GM10248 (cell line): ENCODE measurements at regions of chr9 and their contacts with region 1.

Region 1: DNA sequence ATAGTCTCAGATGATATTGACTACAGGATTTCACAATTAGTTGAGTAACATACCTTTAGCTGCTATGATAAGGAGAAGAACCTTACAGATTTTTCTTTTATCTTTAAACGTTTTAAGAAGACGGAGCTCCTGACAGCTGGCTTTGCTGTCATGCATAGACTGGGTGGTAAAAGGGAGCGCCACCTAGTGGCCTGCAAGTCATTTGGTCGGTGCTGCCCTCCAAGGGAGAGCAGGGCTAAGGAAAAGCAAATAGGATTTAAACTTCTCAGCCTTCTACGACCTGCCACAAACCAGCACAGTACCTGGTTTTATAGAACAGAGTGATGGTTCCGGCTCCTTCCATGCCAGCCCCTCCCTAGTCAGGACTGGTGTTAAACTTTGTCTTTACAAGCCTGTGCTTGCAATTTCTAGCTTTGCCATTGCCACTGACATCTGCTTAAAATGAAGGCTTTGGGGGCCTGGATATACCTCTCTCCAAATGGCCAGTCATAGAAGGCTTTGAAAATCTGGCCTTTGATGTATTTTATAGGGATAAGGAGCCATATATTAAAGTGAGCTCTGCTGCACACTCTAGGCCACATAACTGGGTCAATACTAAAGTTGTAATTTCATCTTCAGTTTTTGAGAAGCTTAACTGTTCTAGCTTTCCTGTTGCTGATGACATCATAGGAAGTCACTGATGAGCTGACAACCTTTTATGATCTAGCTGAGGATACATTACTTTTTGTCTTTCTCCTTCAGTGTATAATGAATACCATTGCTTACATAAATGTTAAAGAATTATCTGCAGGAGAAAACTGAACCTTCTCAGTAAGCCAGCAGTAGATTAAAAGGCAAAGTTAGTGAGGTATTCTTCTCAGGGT is 31.1 kb upstream of the ADAMTSL1 start:
- DNase-seq: peak; percentile 56
- CTCF ChIP-seq: peak; percentile 86

Region 2: DNA sequence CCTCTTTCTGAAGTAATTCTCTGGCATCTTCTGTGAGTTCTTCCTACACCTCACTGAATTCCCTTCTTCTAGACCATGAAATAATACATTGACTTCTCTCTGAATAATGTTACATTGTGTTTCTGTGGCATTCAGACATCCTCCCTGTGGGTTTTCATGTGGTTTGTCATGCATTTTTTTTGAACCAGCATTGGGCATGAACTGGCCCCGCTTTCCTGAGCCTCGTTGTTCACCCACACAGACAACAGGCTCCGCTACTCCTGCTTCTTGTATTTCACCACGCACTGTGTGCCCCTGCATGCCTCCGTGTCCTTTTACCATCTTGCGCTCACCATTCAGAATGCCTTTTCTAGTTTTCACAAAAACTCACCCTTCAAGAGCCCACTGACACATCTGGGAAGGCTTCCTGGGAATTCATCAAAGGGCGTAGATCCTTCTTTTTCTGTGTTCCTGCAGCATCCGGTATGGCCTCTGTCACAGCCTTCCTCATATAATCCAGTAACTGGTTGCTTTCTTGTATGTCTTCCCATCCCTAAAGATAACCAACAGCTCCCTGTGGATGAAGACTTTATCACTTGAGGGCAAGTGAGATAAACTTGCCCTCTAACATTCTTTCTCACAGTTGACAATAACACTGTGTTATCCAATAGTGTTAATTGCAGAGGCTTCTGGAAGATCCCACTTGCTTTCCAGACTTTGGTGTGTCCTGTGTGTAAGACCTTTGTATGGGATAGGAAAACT is 20.4 kb before region 1 on chr9:
- CTCF ChIA-PET with region 1: interaction called, 27 read pairs
- POLR2A ChIA-PET with region 1: no interaction called
- DNase-seq: no peak
- CTCF ChIP-seq: no peak

Region 3: DNA sequence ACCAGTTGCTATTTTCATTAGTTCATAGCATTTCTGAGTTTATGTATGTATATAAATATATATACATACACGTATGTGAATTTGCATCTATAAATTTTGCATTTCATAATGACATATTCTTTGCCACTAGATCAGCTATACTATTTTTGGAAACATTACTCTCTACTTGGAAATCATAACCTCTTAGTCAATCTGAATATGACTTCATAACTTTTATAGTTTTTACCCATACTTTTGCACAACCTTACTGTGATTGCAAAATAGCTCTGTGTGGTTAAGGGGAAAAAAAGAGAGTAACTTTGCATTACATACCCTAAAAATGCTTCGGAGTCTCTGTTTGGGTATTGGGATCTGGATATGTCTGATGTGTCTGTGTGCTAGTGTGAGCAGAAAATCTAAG is 13.8 kb before region 1 on chr9:
- CTCF ChIA-PET with region 1: interaction called, 27 read pairs
- POLR2A ChIA-PET with region 1: no interaction called
- DNase-seq: no peak
- CTCF ChIP-seq: no peak

Region 4: GRCh38 chr9:18457510-18457909 is 14.7 kb after region 1 on chr9:
- CTCF ChIA-PET with region 1: interaction called, 73 read pairs
- POLR2A ChIA-PET with region 1: no interaction called
- DNase-seq: no peak
- CTCF ChIP-seq: no peak

Region 5: DNA sequence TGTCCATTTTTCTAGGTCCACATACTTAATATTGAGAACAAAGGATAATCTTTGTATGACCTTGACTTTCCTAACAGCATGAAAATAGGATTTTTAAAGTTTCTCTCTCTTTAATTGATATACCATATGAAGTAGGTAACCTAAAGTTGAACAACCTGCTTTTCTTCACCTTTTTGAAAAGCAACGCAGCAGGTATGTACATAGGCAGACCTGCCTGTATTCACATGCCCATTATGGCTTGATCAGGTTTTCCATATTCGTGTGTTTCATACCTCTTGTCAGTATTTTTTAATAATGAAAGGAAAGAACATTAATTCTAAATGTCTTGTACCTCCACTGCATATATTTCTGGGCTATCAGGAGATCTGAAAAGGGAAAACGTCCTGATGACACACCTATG is 29.6 kb after region 1 on chr9:
- CTCF ChIA-PET with region 1: interaction called, 25 read pairs
- POLR2A ChIA-PET with region 1: no interaction called
- DNase-seq: no peak
- CTCF ChIP-seq: no peak